Heart right ventricle (tissue), 16 donors: ENCODE measurements at regions of chr7 and their contacts with region 1.

Region 1: GRCh38 chr7:8217200-8218068 is 44.5 kb downstream of the ICA1 start:
- DNase-seq: peak in 1 of 2 donors; percentile 51
- ATAC-seq: peak in 5 of 8 donors; percentile 19 to 50 (median 32)
- H3K4me3 ChIP-seq: no peak overlapping the region
- H3K27ac ChIP-seq: no peak overlapping the region
- H3K4me1 ChIP-seq: peaks cover 0 to 18% (median 8%) of the 10 kb centered on the region in 9 donors
- H3K27me3 ChIP-seq: no peaks in the 10 kb centered on the region
- CTCF ChIP-seq: peak; percentile 55 to 84 (median 74)

Region 2: GRCh38 chr7:7424151-7424873 is 793.1 kb before region 1 on chr7:
- intact Hi-C with region 1: loop called in 2 of 10 experiments (anchors 2 to 10 kb)
- DNase-seq: peak; percentile 18 to 69
- ATAC-seq: peak; percentile 69 to 89 (median 82)
- H3K4me3 ChIP-seq: peak overlapping the region in 9 of 10 donors; percentile 16 to 62 (median 52)
- H3K27ac ChIP-seq: peak overlapping the region in 4 of 10 donors; percentile 10 to 48 (median 28)
- H3K4me1 ChIP-seq: peaks cover 0 to 8% (median 0%) of the 10 kb centered on the region in 9 donors
- H3K27me3 ChIP-seq: peaks cover 0 to 5% (median 0%) of the 10 kb centered on the region in 7 donors
- CTCF ChIP-seq: peak; percentile 46 to 89 (median 77)

Region 3: DNA sequence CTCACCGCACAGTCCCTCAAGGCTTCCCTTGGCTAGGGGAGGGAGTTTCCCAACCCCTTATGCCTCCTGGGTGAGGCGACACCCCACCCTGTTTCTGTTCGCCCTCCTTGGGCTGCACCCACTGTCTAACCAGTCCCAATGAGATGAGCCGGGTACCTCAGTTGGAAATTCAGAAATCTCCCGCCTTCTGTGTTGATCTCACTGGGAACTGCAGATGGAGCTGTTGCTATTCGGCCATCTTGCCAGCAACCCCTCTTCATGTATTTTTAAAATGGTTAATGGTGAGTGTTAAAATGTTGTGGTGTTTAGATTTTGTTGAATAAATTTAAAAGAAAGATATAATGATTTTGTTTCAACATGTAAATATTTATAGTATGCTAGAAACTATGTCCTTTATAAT is 554.9 kb before region 1 on chr7:
- intact Hi-C with region 1: loop called in 1 of 10 experiments (anchors 10 kb)
- DNase-seq: no peak
- ATAC-seq: no peak
- H3K4me3 ChIP-seq: no peak overlapping the region
- H3K27ac ChIP-seq: no peak overlapping the region
- H3K4me1 ChIP-seq: peaks cover 0 to 5% (median 0%) of the 10 kb centered on the region in 9 donors
- H3K27me3 ChIP-seq: no peaks in the 10 kb centered on the region
- CTCF ChIP-seq: peak in 7 of 9 donors; percentile 20 to 58 (median 34)

Region 4: DNA sequence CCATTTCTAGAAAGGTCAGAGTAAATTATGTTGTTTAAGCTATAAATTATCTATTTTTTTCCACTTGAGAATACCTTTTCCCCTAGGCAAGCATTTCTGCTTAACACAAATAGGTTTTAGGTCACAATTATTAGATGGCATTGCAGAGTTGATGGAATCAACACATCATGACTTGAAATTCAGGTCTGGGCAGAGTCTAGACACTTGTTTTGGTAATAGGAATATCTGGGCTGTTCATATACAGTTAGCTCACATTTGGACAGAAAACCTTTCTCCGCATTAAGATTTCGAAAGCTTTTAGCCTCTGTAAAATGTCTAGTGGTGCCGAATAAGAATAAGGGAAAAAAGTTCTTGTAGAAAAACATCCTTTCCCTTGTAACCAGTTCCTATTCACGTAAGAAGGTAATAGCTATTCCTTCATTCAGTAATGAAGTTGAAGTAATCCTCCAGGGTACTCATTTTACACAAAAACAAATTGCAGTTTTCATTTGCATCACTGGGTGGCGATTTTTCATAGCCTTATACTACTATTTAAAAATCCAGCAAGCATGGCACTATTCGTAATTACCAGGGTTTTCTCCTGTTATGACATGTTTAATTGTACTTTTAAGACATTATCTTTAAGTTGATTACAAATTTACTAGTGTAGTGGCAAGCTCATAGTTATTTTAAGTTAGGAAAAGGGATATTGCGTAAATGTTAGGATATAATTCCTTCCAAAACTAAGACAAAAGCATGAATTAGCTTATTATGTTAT is 536.1 kb before region 1 on chr7:
- intact Hi-C with region 1: loop called in 5 of 10 experiments (anchors 5 to 10 kb)
- DNase-seq: peak in 1 of 2 donors; percentile 81
- ATAC-seq: peak in 7 of 8 donors; percentile 77 to 95 (median 91)
- H3K4me3 ChIP-seq: peak overlapping the region in 4 of 10 donors; percentile 6 to 13 (median 7)
- H3K27ac ChIP-seq: peak overlapping the region; percentile 7 to 77 (median 46)
- H3K4me1 ChIP-seq: peaks cover 0 to 35% (median 24%) of the 10 kb centered on the region in 9 donors
- H3K27me3 ChIP-seq: no peaks in the 10 kb centered on the region
- CTCF ChIP-seq: peak; percentile 56 to 85 (median 73)

Region 5: DNA sequence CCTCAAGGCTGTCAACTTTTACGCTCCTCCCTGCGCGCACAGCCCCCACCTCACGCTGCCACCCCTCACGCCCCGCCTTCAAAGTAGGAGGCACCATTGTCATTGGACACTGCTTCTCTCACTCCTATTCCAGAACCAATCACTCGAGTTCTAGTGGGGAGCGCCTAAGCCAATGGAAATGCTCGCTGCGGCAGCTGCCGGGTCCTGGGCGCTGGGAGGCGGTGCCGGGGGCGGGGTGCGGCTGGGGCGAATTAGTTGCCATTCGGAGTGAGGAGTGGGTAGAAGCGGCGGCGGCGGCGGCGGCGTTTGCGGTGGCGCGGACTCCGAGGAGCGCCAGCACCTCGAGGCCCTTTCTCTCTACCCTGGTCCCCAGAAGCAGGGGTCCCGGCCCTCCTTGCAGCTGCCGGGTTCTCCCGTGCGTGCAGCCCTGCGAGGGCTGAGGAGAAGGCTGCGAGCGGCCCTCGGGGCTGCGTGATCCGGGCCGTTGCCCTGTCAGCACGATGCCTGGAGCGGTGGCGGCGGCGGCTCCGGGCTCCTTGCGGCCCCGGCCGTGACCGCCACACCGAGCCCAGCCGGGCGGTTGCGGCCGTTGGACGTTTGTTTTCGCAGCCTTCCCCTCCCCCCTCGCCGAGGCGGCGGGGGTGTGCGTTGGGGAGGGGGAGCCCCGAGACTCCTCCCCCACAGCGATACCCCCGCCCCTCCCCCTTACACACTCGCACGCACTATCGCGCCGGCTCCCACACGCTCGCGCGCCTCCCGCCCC is 248.7 kb before region 1 on chr7 and contains the start of gene GLCCI1:
- intact Hi-C with region 1: loop called in 2 of 10 experiments (anchors 5 to 10 kb)
- DNase-seq: peak; percentile 96 to 98
- ATAC-seq: peak; percentile 98 to 99 (median 99)
- H3K4me3 ChIP-seq: peak within 1 kb of the TSS; percentile 57 to 100 (median 90)
- H3K27ac ChIP-seq: peak within 1 kb of the TSS; percentile 72 to 98 (median 92)
- H3K4me1 ChIP-seq: peaks cover 0 to 35% (median 13%) of the 10 kb centered on the region in 9 donors
- H3K27me3 ChIP-seq: no peaks in the 10 kb centered on the region
- CTCF ChIP-seq: no peak
- total RNA-seq, gene GLCCI1: 3.6 to 13.0 (median 7.6) TPM

Region 6: DNA sequence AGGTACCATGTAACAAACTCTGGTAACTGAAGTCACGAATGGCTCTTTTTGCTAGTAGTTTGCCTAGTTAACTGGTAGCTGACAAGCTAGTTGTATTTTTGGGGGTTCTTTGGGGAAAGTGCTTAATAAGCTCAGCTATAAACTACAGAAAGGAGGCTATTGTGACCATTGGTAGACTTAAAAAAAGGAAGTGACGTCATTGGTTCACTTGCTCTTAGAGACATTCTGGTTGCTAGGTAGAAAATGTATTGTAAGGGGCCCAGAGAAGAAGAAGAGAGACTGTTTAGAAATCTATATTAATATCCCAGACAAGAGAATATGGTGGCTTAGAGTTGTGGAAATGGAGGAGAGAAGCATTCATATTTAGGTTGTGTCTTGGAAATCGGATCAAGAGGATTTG is 319.0 kb after region 1 on chr7:
- intact Hi-C with region 1: no loop called
- DNase-seq: no peak
- ATAC-seq: no peak
- H3K4me3 ChIP-seq: no peak overlapping the region
- H3K27ac ChIP-seq: no peak overlapping the region
- H3K4me1 ChIP-seq: no peaks in the 10 kb centered on the region
- H3K27me3 ChIP-seq: no peaks in the 10 kb centered on the region
- CTCF ChIP-seq: no peak